ENCODE measurements at regions of chr15 and their contacts with region 1.

Region 1: DNA sequence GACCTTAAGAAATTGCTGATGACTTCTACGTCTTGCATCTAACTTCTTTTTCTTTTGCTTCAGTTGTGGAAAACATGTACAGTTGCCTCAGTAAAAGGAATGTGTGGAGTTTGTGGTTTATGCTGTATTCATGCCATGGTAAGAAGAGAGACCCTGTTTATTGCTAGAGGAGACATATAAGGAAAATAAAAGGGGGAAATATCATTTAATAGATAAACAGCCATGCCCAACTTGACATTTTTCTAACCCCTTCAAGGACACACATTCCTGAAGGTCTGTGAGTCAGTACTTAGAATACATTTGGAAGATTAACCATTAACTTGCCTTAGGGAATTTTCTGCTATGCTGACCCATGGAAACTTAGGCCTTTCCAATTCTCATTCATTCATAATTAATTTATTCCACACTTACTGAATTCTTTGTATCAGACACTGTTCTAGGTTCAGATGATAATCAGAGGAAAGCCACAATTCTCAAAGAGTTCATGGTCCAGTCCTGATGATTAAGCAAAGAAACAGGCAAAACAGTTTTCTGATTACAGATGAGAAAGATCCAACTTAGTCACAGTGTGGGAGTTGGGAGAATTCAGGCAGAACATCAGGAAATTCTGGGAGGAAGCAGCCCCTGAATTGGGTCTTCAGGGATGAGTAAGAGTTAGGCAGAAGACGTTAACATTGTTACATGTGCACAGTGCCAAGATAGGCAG is 329.8 kb upstream of the RASGRP1 start:
- DNase-seq: peak; percentile 91
- H3K4me3 ChIP-seq: no peak overlapping the region
- H3K27ac ChIP-seq: peak overlapping the region; percentile 92
- H3K4me1 ChIP-seq: peaks cover 49% of the 10 kb centered on the region
- H3K27me3 ChIP-seq: no peaks in the 10 kb centered on the region
- CTCF ChIP-seq: no peak
- POLR2A ChIP-seq: no peak

Region 2: GRCh38 chr15:38642689-38643270 is 251.6 kb before region 1 on chr15:
- CTCF ChIA-PET with region 1: no interaction called
- POLR2A ChIA-PET with region 1: no interaction called
- dilution Hi-C with region 1: no loop called
- intact Hi-C with region 1: no loop called
- DNase-seq: no peak
- H3K4me3 ChIP-seq: no peak overlapping the region
- H3K27ac ChIP-seq: no peak overlapping the region
- H3K4me1 ChIP-seq: no peaks in the 10 kb centered on the region
- H3K27me3 ChIP-seq: peaks cover 8 to 14% of the 10 kb centered on the region in 2 experiments
- CTCF ChIP-seq: no peak
- POLR2A ChIP-seq: no peak

Region 3: DNA sequence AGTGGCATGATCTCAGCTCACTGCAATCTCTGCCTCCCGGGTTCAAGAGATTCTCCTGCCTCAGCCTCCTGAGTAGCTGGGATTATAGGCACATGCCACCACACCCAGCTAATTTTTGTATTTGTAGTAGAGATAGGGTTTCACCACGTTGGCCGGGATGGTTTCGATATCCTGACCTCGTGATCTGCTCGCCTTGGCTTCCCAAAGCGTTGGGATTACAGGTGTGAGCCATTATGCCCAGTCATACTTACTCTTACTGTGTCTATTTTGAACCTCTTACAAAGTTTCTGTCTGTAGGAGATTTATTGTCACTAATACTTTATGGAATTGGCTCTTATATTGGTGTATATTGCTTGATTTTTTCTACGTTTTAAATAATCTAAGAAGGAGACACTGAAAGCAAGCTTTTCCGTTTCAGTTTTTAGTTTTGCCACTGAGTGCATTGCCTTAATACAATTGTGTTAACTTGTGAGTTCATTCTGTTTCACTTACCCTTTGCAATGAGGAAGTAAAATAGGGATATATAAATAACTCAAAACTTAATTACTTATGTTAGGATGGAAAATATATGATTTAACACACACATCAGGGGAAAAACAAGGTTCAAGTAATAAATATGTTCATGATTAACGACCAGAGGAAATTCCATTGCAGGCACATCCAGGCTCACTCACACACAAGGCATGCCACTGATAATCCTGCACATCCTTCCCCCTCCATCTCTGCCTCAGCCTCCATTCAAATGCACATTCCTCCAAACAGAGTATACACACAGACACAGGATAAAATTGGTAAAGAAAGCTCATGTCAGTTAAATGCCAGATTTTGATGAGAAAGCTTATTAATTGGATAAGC is 50.4 kb before region 1 on chr15:
- CTCF ChIA-PET with region 1: interaction called, 3 read pairs
- POLR2A ChIA-PET with region 1: interaction called, 3 read pairs
- dilution Hi-C with region 1: no loop called
- intact Hi-C with region 1: loop called (anchors 1 kb)
- DNase-seq: peak; percentile 95
- H3K4me3 ChIP-seq: peak overlapping the region in 1 of 3 experiments; percentile 15
- H3K27ac ChIP-seq: peak overlapping the region; percentile 98
- H3K4me1 ChIP-seq: peaks cover 41% of the 10 kb centered on the region
- H3K27me3 ChIP-seq: no peaks in the 10 kb centered on the region
- CTCF ChIP-seq: no peak
- POLR2A ChIP-seq: peak; percentile 61

Region 4: DNA sequence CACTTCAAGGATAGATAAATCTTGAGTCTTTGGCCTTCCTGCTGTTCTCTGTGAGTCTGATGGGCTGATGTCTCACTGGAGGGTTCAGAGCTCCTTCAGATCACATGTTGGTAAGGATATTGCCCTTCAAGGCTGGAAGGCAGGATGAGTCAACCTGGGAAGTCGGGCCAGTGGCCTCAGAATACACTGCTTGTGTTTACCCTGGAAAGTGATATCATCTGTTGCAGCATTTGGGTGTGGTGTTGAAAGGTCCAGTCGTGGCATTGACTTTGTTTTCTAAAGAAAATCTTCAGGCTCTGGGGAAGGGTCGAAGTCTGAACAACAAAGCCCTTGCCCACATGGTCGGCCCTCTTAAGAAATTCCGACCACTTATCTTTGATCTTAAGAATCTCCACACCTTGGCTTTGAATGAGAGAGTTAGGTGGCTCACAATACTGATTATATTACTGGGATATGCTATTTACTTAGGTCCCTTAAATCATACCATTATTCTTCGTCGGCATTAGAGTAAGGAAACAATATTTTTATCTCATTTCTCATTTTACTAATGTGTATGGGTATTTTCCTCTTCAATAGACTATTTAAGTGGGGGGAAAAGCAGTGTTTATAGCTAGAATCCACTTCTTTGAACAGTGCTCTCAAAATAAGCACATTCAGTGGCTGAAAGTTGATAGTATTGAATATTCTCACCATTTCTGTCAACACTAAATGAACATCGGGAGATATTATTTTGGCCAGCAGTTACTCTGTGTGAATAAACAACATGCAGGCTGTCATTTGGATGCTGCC is 25.9 kb before region 1 on chr15:
- CTCF ChIA-PET with region 1: no interaction called
- POLR2A ChIA-PET with region 1: no interaction called
- dilution Hi-C with region 1: no loop called
- intact Hi-C with region 1: loop called (anchors 1 kb)
- DNase-seq: peak; percentile 73
- H3K4me3 ChIP-seq: no peak overlapping the region
- H3K27ac ChIP-seq: peak overlapping the region; percentile 79
- H3K4me1 ChIP-seq: peaks cover 14% of the 10 kb centered on the region
- H3K27me3 ChIP-seq: no peaks in the 10 kb centered on the region
- CTCF ChIP-seq: no peak
- POLR2A ChIP-seq: no peak

Region 5: DNA sequence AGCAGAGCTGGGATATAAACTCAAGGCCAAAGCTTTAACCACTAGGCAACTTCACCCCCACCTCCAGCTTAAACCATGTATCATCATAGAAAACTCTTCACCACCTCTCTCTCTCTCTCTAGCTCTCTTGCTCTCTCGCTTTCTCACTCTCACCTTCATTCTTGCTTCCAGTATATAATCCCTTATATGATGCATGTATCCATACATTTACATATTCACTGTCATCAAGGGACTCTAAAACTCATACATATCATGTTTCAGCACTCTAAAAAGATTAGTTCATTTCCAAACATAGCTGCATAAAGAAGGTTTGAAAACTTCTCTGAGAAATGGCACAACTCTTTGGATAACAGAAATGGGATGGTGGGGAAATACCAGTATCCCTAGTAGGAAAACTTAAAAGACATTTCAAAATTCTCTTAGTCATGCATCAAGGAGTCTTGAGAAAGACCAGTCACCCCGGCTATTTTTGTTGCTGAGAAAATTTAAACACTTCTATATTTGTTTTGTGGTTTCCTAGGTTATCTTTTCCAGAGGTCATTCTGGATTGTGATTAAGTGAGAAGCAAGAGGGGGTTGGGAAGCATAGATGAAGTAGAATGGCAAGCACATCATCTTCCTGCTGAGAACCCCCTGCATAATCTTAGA is 238.7 kb after region 1 on chr15:
- CTCF ChIA-PET with region 1: no interaction called
- POLR2A ChIA-PET with region 1: no interaction called
- dilution Hi-C with region 1: loop called (anchors 10 kb)
- intact Hi-C with region 1: loop called (anchors 2 kb)
- DNase-seq: peak; percentile 64
- H3K4me3 ChIP-seq: no peak overlapping the region
- H3K27ac ChIP-seq: peak overlapping the region; percentile 48
- H3K4me1 ChIP-seq: peaks cover 53% of the 10 kb centered on the region
- H3K27me3 ChIP-seq: no peaks in the 10 kb centered on the region
- CTCF ChIP-seq: no peak
- POLR2A ChIP-seq: no peak